Motor neuron (in vitro differentiated cells): ENCODE measurements at regions of chr11 and their contacts with region 1.

Region 1: DNA sequence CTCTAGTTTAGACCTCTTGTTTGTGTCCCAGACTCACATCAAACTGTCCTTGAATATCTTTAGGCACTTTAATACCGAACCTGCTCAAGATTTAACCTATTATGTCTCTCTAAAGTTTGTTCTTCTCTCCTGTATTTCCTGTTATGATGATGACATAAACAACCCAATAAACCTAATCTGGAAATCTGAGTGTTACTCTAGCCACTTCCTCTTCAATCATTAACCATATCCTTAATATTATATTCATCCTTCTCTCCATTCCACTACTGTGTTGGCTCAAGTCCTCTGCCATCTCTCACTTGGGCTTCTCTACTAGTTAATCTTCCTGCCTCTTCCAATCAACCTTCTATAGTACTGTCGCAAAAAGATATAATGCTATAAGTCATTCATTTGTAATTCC is 36.0 kb downstream of the COPB1 start:
- ATAC-seq: no peak
- H3K4me3 ChIP-seq: no peak overlapping the region
- H3K27ac ChIP-seq: no peak overlapping the region
- H3K4me1 ChIP-seq: no peaks in the 10 kb centered on the region

Region 2: GRCh38 chr11:14300661-14301304 is 162.8 kb before region 1 on chr11:
- in situ Hi-C with region 1: loop called in 3 of 9 experiments (anchors 10 to 25 kb)
- ATAC-seq: peak; percentile 54 to 98 (median 90)
- H3K4me3 ChIP-seq: no peak overlapping the region
- H3K27ac ChIP-seq: no peak overlapping the region
- H3K4me1 ChIP-seq: no peaks in the 10 kb centered on the region

Region 3: GRCh38 chr11:14677146-14677545 is 213.5 kb after region 1 on chr11:
- in situ Hi-C with region 1: no loop called
- ATAC-seq: no peak
- H3K4me3 ChIP-seq: no peak overlapping the region
- H3K27ac ChIP-seq: no peak overlapping the region
- H3K4me1 ChIP-seq: no peaks in the 10 kb centered on the region